ENCODE measurements at regions of chr13 and their contacts with region 1.

Region 1: GRCh38 chr13:41652727-41653361 is 195.5 kb downstream of the RGCC start:
- DNase-seq: no peak
- ATAC-seq: no peak

Region 2: DNA sequence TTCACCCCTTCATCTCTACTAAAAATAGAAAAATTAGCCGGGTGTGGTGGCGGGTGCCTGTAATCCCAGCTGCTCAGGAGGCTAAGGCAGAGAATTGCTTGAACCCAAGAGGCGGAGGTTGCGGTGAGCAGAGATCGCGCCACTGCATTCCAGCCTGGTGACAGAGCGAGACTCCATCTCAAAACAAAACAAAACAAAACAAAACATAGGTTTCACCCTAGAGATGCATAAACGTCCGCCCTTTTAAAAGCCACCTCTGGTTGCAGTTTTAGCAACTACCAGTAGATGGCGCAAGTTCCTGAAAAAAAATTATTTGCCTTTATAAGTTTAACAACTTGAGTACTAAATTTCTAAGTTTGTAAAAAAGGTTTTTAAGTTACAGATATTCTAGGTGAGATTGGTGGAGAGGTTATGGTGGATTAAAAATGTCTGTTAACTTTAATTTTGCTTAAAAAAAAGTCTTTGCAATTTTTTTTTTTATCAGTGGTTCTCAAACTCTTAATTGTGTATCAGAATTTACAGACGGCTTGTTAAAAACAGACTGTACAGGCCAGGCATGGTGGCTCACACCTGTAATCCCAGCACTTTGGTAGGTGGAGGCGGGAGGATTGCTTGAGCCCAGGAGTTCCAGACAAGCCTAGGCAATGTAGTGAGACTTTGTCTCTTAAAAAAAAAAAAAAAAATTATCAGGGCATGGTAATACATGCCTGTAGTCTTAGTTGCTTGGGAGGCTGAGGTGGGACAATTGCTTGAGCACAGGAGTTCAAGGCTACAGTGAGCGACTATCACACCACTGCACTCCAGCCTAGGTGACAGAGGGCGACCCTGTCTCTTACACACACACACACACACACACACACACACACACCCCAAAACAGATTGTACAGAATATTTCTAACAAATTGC is 299.7 kb before region 1 on chr13:
- intact Hi-C with region 1: loop called (anchors 5 kb)
- DNase-seq: no peak
- ATAC-seq: no peak

Region 3: GRCh38 chr13:41411522-41411921 is 241.3 kb before region 1 on chr13:
- intact Hi-C with region 1: loop called (anchors 5 kb)
- DNase-seq: no peak
- ATAC-seq: no peak

Region 4: DNA sequence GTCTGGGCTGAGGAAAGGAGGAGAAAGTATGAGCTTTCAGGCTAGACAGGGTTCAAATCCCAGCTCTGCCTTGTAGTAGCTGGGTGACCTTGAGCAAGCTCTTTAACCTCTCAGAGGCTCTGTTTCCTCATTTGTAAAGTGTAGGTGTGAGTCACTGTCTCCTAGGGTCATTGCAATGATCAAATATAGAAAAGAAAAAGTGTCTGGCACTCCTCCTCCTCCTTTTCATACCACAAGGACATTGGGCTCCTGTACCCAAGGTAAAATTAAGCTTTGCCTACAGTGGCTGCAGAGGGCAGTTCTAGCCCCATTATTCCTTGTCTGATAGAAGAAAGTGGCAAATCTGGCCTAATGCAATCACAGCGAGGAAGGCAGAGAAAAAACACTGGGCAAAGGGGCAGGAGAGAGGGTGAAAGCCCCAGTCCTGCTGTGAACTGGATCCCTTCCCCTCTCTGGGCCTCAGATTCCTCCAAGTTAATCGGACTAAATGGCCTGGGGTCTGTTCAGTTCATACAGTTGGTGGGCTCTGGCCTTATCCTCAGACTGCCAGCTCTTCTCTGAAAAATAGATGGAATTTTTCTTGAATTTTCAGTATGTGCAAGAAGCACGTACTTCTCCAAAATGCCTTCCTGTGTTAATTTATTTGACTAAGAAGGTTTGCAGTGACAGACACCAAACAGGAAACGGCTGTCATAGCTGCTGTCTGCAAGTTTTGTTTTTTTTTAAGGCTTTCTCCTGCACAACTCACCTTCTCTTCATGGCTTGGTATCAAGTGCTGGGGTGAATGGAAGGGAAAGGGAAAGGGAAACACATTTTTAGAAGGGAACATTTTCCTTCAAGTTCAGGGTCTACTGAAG is 160.2 kb before region 1 on chr13:
- intact Hi-C with region 1: loop called (anchors 5 kb)
- DNase-seq: no peak
- ATAC-seq: no peak

Region 5: DNA sequence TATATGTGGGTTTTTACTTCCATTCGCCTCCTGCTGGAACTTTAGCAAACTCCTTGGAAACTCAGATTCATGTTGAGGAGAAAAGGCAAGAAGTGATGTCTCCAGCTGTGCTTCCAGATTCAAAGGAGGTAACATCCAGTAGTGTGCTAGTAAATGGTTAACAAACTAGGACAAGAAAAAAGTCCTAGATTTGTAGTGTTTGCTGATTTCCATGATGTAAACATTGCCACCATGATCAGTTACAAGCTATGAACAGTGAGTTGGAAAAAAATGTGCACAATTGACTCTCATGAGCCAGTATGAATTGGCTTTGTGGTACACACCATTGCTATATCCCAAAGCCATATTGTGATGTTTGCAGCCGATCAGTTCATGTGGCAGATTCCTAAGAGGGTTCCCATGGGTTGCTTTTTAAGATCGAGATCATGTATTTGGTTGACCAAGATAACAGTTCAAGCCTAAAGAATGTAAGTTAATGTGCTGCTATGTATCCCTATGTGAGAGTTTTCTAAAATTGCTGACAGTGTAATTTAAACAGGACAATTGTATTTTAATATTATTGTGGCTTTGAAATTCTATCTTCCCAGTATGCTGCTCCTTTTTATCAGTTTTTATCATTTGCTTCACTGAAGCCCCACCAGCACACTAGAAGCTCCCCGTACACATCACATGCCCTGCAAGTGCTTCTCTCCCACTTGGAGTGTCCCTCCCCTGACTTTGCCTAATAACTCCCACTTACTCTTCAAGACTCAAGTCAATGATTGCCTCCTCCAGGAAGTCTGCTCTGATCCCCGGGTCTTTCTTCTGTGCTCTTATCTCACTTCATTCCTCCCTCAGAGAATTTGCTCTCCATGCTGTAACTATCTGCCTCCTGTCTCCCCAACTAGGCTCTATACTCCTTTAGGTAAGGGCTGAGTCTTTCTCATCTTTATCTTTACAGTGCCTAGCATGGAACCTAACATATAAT is 47.2 kb before region 1 on chr13:
- intact Hi-C with region 1: loop called (anchors 5 kb)
- DNase-seq: no peak
- ATAC-seq: no peak